HCT116 (cell line): ENCODE measurements at regions of chr19 and their contacts with region 1.

Region 1: DNA sequence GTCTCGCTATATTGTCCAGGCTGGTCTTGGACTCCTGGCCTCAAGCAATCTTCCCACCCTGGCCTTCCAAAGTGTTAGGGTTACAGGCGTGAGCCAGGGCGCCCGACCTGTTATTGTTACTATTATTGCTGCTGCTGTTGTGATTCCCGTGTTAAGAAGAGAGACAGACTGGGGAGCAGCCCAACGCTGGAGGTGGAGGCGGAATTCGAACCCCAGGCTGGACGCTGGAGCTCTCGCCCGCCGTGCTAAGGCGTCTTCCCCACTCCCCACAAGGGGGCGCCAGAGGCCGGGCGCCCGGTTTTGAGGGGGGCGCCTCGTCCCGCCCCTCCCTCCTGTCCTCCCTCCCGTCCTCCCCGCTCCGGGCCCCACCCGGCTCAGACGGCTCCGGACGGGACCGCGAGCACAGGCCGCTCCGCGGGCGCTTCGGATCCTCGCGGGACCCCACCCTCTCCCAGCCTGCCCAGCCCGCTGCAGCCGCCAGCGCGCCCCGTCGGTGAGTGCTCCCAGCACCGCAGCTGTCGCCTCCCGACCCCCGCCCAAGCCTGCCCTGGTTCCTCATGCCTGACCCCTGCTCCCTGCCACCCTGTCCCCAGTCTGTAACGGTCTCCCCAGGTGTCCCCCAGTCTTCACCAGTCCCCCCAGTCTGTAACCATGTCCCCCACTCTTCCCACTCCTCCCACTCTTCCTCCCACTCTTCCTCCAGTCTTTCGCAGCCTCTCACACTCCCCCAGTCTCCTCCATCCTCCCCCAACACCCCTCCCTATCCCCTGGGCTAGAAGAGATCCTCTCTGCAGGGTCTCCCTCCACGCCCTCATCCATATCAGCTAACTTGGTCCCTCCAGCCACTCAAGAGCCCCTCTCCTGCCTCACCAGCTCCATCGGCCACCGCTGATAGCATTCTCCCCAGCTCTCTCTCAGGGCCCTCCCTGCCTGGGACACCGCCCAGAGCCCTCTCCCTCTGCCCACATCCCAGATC is at the start of gene EHD2:
- DNase-seq: no peak
- ATAC-seq: peak; percentile 92
- H3K4me3 ChIP-seq: peak within 1 kb of the TSS; percentile 74 to 97
- H3K27ac ChIP-seq: peak within 1 kb of the TSS; percentile 93
- H3K4me1 ChIP-seq: peaks cover 5 to 17% of the 10 kb centered on the region in 2 experiments; a peak in 3 of 4 replicates
- H3K27me3 ChIP-seq: no peaks in the 10 kb centered on the region
- CTCF ChIP-seq: peak; percentile 83 to 95 (median 90)
- POLR2A ChIP-seq: peak; percentile 37
- RAD21 ChIP-seq: peak; percentile 99
- total RNA-seq, gene EHD2: 60.5 TPM

Region 2: DNA sequence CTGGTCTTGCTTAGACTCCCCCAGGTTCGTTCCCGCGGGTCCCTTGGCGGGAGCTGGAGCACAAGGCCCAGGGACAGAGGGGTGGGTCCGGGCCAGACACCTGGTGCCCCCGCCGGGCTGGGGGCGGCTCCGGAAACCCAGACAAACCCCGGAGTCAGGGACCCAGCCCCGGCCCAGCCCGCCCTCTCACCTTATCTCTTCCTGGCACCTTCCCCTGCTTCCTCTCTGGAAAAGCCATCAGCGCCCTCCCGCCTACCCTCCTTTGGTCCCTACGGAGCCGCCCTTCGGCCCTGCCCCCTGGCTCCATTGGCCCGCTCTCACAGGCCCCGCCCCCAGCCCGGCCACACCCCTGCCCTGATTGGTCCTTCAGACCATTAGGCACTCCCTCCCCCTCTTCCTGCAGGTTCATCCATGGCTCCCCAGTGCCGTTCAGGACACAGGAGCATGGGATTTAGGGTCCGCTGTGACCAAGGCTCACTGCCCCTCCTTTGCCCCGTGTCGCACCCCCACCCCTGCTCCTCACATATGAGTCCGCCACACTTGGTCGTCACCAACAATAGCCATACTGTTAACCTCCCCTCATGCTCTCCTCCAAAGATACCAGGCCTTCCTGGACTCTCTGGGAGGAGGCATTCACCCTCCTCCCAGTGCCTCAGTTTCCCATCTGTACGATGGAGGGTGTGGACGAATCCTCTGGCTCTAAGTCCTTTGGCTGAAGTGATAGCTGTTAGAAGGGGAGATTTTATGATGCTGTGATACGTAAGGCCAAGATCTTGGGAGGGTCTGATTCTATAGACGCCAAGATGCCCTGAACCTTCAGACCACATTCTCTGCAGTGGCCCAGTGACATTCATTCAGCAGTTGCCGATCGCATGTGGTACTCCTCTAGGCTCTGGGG is 16.9 kb after region 1 on chr19:
- CTCF ChIA-PET with region 1: interaction called, 62 read pairs
- POLR2A ChIA-PET with region 1: interaction called, 4 read pairs
- RAD21 ChIA-PET with region 1: interaction called in 1 of 2 experiments, 5 read pairs
- intact Hi-C with region 1: no loop called
- DNase-seq: no peak
- ATAC-seq: peak; percentile 87
- H3K4me3 ChIP-seq: peak overlapping the region; percentile 49 to 58
- H3K27ac ChIP-seq: peak overlapping the region; percentile 98
- H3K4me1 ChIP-seq: peaks cover 35 to 57% of the 10 kb centered on the region in 2 experiments
- H3K27me3 ChIP-seq: no peaks in the 10 kb centered on the region
- CTCF ChIP-seq: no peak
- POLR2A ChIP-seq: no peak
- RAD21 ChIP-seq: no peak

Region 3: DNA sequence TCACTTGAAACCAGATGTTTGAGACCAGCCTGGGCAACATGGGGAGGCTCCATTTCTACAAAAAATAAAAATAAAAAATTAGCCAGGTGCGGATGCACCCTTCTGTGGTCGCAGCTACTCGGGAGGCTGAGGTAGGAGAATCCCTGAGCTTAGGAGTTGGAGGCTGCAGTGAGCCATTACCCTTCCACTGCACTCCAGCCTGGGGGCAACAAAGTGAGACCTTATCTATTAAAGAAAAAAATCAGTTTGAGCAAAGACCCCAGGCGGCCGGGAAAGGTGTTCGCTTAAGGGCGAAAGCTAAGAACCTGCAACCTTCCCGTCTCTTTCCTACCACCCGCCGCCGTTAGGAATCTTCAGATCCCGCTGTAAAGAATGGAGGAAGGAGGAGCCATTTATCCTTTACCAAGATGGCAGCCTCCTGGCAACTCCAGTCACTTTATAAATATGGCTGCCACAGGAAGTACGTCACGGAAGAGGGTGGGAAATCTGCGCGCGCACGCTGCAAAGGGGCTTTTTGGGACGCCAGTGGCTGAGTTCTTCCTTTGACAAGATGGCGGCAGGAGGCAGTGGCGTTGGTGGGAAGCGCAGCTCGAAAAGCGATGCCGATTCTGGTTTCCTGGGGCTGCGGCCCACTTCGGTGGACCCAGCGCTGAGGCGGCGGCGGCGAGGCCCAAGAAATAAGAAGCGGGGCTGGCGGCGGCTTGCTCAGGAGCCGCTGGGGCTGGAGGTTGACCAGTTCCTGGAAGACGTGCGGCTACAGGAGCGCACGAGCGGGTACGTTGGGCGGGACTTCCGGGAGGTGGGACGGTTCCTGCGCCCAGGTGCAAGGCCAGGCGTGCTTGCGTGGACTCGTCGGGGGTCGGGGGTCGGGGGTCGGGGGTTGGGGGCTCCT is 31.9 kb after region 1 on chr19 and contains the start of gene NOP53:
- CTCF ChIA-PET with region 1: interaction called, 68 read pairs
- POLR2A ChIA-PET with region 1: interaction called, 32 read pairs
- RAD21 ChIA-PET with region 1: interaction called, 7 to 16 read pairs
- intact Hi-C with region 1: loop called (anchors 1 kb)
- DNase-seq: peak; percentile 93
- ATAC-seq: peak; percentile 71
- H3K4me3 ChIP-seq: peak within 1 kb of the TSS; percentile 74 to 83
- H3K27ac ChIP-seq: peak within 1 kb of the TSS; percentile 85
- H3K4me1 ChIP-seq: peaks cover 25 to 43% of the 10 kb centered on the region in 2 experiments
- H3K27me3 ChIP-seq: no peaks in the 10 kb centered on the region
- CTCF ChIP-seq: peak in 1 of 3 experiments; percentile 1; a peak in 1 of 6 replicates
- POLR2A ChIP-seq: no peak
- RAD21 ChIP-seq: no peak
- total RNA-seq, gene NOP53: 322 TPM

Region 4: DNA sequence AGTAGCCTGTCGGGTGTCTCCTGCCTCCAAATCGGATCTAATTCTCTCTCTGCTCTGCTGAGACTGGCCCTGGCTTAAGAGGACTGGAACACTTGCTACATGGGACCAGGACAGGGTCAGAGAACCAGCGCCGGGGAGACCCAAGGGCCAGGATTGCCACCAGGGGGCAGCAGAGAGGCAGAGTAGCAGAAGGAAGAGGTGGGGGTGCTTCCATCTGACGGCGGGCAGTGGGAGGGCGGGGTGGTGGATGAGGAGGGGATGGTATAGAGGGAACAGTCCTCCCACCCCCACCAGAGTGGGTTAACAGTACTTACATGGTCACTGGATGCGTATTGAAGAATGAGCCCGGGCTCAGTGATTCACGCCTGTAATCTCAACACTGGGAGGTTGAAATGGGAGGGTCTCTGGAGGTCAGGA is 77.1 kb after region 1 on chr19:
- CTCF ChIA-PET with region 1: interaction called, 9 read pairs
- POLR2A ChIA-PET with region 1: no interaction called
- RAD21 ChIA-PET with region 1: no interaction called
- intact Hi-C with region 1: loop called (anchors 2 kb)
- DNase-seq: peak; percentile 88
- ATAC-seq: peak; percentile 88
- H3K4me3 ChIP-seq: peak overlapping the region; percentile 21 to 23
- H3K27ac ChIP-seq: peak overlapping the region; percentile 81
- H3K4me1 ChIP-seq: peaks cover 14 to 25% of the 10 kb centered on the region in 2 experiments
- H3K27me3 ChIP-seq: no peaks in the 10 kb centered on the region
- CTCF ChIP-seq: peak; percentile 87 to 98 (median 97)
- POLR2A ChIP-seq: no peak
- RAD21 ChIP-seq: peak; percentile 64